ENCODE measurements at regions of chr12 and their contacts with region 1.

Region 1: GRCh38 chr12:87383680-87384079 is 645.5 kb downstream of the C12orf50 start:
- DNase-seq: peak; percentile 29
- H3K4me3 ChIP-seq: no peak overlapping the region
- H3K27ac ChIP-seq: no peak overlapping the region
- H3K4me1 ChIP-seq: peaks cover 16% of the 10 kb centered on the region
- H3K27me3 ChIP-seq: peaks cover 63% of the 10 kb centered on the region
- CTCF ChIP-seq: no peak

Region 2: GRCh38 chr12:86948851-86949250 is 434.8 kb before region 1 on chr12:
- CTCF ChIA-PET with region 1: no interaction called
- POLR2A ChIA-PET with region 1: no interaction called
- intact Hi-C with region 1: no loop called
- DNase-seq: no peak
- H3K4me3 ChIP-seq: no peak overlapping the region
- H3K27ac ChIP-seq: no peak overlapping the region
- H3K4me1 ChIP-seq: no peaks in the 10 kb centered on the region
- H3K27me3 ChIP-seq: no peaks in the 10 kb centered on the region
- CTCF ChIP-seq: no peak

Region 3: GRCh38 chr12:87349681-87350080 is 34.0 kb before region 1 on chr12:
- CTCF ChIA-PET with region 1: no interaction called
- POLR2A ChIA-PET with region 1: no interaction called
- intact Hi-C with region 1: no loop called
- DNase-seq: no peak
- H3K4me3 ChIP-seq: no peak overlapping the region
- H3K27ac ChIP-seq: no peak overlapping the region
- H3K4me1 ChIP-seq: no peaks in the 10 kb centered on the region
- H3K27me3 ChIP-seq: no peaks in the 10 kb centered on the region
- CTCF ChIP-seq: no peak

Region 4: DNA sequence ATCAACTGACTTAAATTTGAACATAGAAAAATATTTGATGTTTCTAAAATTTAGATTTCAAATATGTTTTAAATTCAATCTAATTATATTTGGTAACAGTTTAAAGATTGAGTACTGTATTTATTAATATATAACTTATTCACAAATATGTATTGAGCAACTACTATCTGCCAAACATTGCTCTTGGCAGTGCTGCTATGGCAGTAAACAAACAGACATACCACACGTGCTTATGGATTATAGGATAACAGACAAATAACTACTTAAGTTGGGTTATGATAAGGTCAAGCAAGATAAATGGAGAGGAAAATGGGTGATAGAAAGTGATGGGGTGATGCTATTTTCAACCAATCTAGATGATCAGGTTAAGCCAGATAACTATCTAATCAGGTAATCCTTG is 107.4 kb after region 1 on chr12:
- CTCF ChIA-PET with region 1: no interaction called
- POLR2A ChIA-PET with region 1: no interaction called
- intact Hi-C with region 1: no loop called
- DNase-seq: no peak
- H3K4me3 ChIP-seq: no peak overlapping the region
- H3K27ac ChIP-seq: no peak overlapping the region
- H3K4me1 ChIP-seq: no peaks in the 10 kb centered on the region
- H3K27me3 ChIP-seq: no peaks in the 10 kb centered on the region
- CTCF ChIP-seq: no peak

Region 5: GRCh38 chr12:87848248-87848868 is 464.7 kb after region 1 on chr12:
- CTCF ChIA-PET with region 1: no interaction called
- POLR2A ChIA-PET with region 1: no interaction called
- intact Hi-C with region 1: loop called (anchors 10 kb)
- DNase-seq: peak; percentile 68
- H3K4me3 ChIP-seq: no peak overlapping the region
- H3K27ac ChIP-seq: no peak overlapping the region
- H3K4me1 ChIP-seq: no peaks in the 10 kb centered on the region
- H3K27me3 ChIP-seq: no peaks in the 10 kb centered on the region
- CTCF ChIP-seq: peak; percentile 87